Panc1 (cell line): ENCODE measurements at regions of chr10 and their contacts with region 1.

Region 1: DNA sequence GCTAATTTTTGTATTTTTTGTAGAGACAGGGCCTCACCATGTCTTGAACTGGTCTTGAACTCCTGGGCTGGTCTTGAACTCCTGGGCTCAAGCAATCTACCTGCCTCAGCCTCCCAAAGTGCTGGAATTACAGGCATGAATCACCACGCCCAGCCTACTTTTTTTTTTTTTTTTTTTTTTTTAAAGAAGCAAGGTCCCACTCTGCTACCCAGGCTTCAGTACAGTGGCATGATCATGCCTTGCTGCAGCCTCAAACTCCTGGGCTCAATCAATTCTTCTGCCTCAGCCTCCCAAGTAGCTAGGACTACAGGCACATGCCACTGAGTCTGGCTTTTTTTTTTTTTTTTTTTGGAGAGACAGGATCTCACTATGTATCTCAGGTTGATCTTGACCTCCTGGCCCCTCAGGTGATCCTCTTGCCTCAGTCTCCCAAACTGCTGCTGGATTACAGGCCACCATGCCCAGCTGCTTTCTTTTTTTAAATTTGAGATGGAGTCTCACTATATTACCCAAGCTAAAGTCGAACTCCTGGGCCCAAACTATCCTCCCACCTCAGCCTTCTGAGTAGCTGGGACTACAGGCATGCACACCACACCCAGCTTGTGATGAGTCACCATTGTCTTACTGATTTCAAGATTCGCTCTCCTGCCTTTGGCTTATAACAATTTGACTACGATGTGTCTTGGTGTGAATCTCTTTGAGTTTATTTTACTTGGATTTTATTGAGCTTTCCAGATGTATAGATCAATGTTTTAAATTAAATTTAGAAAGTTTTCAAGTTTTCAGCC is 9.0 kb downstream of the RPEL1 start:
- DNase-seq: no peak
- ATAC-seq: peak; percentile 30; the same call in 1 of the 2 replicates
- H3K4me3 ChIP-seq: no peak overlapping the region
- H3K27ac ChIP-seq: no peak overlapping the region
- H3K4me1 ChIP-seq: no peaks in the 10 kb centered on the region
- H3K27me3 ChIP-seq: no peaks in the 10 kb centered on the region
- CTCF ChIP-seq: no peak

Region 2: GRCh38 chr10:103276896-103277712 is 22.4 kb after region 1 on chr10 and contains the start of gene INA:
- CTCF ChIA-PET with region 1: no interaction called
- POLR2A ChIA-PET with region 1: no interaction called
- in situ Hi-C with region 1: no loop called
- intact Hi-C with region 1: no loop called
- DNase-seq: no peak
- ATAC-seq: no peak
- H3K4me3 ChIP-seq: peak within 1 kb of the TSS in 1 of 2 experiments; percentile 12; a peak in 1 of 4 replicates
- H3K27ac ChIP-seq: no peak within 1 kb of the TSS
- H3K4me1 ChIP-seq: peaks cover 11% of the 10 kb centered on the region
- H3K27me3 ChIP-seq: peaks cover 10% of the 10 kb centered on the region
- CTCF ChIP-seq: no peak
- total RNA-seq, gene INA: 0.08 TPM

Region 3: GRCh38 chr10:103451831-103452505 is 197.2 kb after region 1 on chr10 and contains the start of gene CALHM2:
- CTCF ChIA-PET with region 1: no interaction called
- POLR2A ChIA-PET with region 1: interaction called, 15 read pairs
- in situ Hi-C with region 1: no loop called
- intact Hi-C with region 1: no loop called
- DNase-seq: no peak
- ATAC-seq: peak; percentile 63
- H3K4me3 ChIP-seq: peak within 1 kb of the TSS; percentile 34 to 46
- H3K27ac ChIP-seq: peak within 1 kb of the TSS; percentile 62
- H3K4me1 ChIP-seq: peaks cover 17% of the 10 kb centered on the region
- H3K27me3 ChIP-seq: no peaks in the 10 kb centered on the region
- CTCF ChIP-seq: no peak
- total RNA-seq, gene CALHM2: 5.9 TPM